Activated T-helper 2 cell treated with anti-CD3 and anti-CD28 coated beads, Interferon-gamma antibody, Interleukin-2, Interleukin-4, amounts not matched to agents 10 μg/mL and 5 μg/mL and 100 μg/mL, durations not matched to agents 14 hours and 24 hours and 36 hours (primary cell): ENCODE measurements at regions of chr3 and their contacts with region 1.

Region 1: DNA sequence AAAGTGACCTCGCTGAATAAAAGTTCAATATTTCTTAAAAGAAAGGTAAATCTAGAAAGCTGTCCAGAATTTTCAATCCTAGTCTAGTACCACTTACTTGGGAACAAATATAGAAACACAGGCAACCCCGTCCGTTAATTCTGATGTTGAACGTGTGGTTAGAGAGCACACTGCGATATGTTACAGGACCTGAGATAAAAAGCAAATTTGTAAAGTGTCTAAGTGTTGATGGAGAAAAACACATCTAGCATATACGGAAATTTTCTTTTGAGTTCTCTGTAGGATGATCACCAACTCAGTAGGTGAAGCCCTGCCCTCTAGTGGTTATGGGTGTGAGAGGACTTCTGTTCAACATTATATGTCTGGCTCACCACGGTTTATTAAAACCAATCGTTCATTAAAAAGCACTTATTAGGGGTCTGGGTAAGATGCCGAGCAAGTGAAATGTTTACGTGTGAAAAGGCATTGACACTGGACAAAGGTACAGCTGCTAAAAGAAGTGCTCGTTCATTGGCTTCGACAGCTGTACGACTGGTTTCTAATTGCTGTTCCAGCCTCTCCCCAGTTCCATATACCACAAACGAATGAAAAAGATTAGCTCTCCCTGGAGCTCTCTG is 1.0 kb upstream of the ATP2C1 start:
- DNase-seq: peak; percentile 56
- H3K4me3 Mint-ChIP-seq: peak overlapping the region; percentile 93
- H3K27ac Mint-ChIP-seq: peak overlapping the region; percentile 97
- H3K4me1 Mint-ChIP-seq: peaks cover 35% of the 10 kb centered on the region
- H3K27me3 Mint-ChIP-seq: no peaks in the 10 kb centered on the region

Region 2: GRCh38 chr3:130746246-130747039 is 146.4 kb before region 1 on chr3 and contains the start of gene PIK3R4:
- intact Hi-C with region 1: loop called (anchors 1 kb)
- DNase-seq: peak; percentile 94
- H3K4me3 Mint-ChIP-seq: peak within 1 kb of the TSS; percentile 84
- H3K27ac Mint-ChIP-seq: peak within 1 kb of the TSS; percentile 93
- H3K4me1 Mint-ChIP-seq: peaks cover 36% of the 10 kb centered on the region
- H3K27me3 Mint-ChIP-seq: no peaks in the 10 kb centered on the region
- total RNA-seq, gene PIK3R4: 33.4 and 34.9 TPM in 2 replicates

Region 3: DNA sequence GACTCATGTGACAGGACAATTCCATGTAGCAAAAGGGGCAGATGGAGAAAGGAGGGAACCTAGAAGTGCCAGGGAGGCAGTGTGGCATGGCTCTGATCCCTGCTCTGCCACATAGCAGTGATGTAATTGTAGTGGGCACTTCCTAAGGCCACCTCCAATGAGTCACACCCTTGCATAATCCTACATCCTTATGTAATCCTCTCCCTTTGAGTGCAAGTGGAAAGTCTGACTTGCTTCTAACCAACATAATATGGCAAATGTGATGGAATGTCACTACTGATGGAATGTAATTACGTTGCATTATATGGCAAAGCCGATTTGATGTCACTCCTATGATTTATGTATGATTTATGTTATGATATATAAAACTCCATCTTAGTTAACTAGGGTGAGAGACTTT is 71.9 kb before region 1 on chr3:
- intact Hi-C with region 1: loop called (anchors 2 kb)
- DNase-seq: no peak
- H3K4me3 Mint-ChIP-seq: no peak overlapping the region
- H3K27ac Mint-ChIP-seq: no peak overlapping the region
- H3K4me1 Mint-ChIP-seq: no peaks in the 10 kb centered on the region
- H3K27me3 Mint-ChIP-seq: peaks cover 49% of the 10 kb centered on the region

Region 4: GRCh38 chr3:130905551-130905950 is 12.7 kb after region 1 on chr3:
- intact Hi-C with region 1: loop called (anchors 1 kb)
- DNase-seq: no peak
- H3K4me3 Mint-ChIP-seq: no peak overlapping the region
- H3K27ac Mint-ChIP-seq: no peak overlapping the region
- H3K4me1 Mint-ChIP-seq: peaks cover 51% of the 10 kb centered on the region
- H3K27me3 Mint-ChIP-seq: no peaks in the 10 kb centered on the region

Region 5: GRCh38 chr3:131026321-131027178 is 133.7 kb after region 1 on chr3 and contains the starts of genes ASTE1 and NEK11:
- intact Hi-C with region 1: loop called (anchors 5 kb)
- DNase-seq: peak; percentile 89
- H3K4me3 Mint-ChIP-seq: peak within 1 kb of the TSS; percentile 88
- H3K27ac Mint-ChIP-seq: peak within 1 kb of the TSS; percentile 93
- H3K4me1 Mint-ChIP-seq: peaks cover 34% of the 10 kb centered on the region
- H3K27me3 Mint-ChIP-seq: peaks cover 4% of the 10 kb centered on the region
- total RNA-seq, gene ASTE1: 7.4 and 8.0 TPM in 2 replicates
- total RNA-seq, gene NEK11: 1.1 and 1.2 TPM in 2 replicates